ENCODE measurements at regions of chr16 and their contacts with region 1.

Region 1: GRCh38 chr16:20849587-20850390 is 43.5 kb downstream of the REXO5 start:
- DNase-seq: peak; percentile 30 to 71 (median 54)
- ATAC-seq: peak; percentile 82
- H3K4me3 ChIP-seq: no peak overlapping the region
- H3K4me3 Mint-ChIP-seq: no peak overlapping the region
- H3K27ac ChIP-seq: no peak overlapping the region
- H3K27ac Mint-ChIP-seq: peak overlapping the region in 1 of 9 donors; percentile 41
- H3K4me1 ChIP-seq: peaks cover 5 to 7% of the 10 kb centered on the region in 2 donors
- H3K4me1 Mint-ChIP-seq: peaks cover 6 to 37% (median 12%) of the 10 kb centered on the region in 7 donors
- H3K27me3 ChIP-seq: no peaks in the 10 kb centered on the region
- H3K27me3 Mint-ChIP-seq: no peaks in the 10 kb centered on the region

Region 2: GRCh38 chr16:20829536-20829935 is 20.3 kb before region 1 on chr16:
- CTCF ChIA-PET with region 1: no interaction called
- POLR2A ChIA-PET with region 1: no interaction called
- intact Hi-C with region 1: loop called in 1 of 2 experiments (anchors 1 kb)
- DNase-seq: no peak
- ATAC-seq: no peak
- H3K4me3 ChIP-seq: no peak overlapping the region
- H3K4me3 Mint-ChIP-seq: no peak overlapping the region
- H3K27ac ChIP-seq: no peak overlapping the region
- H3K27ac Mint-ChIP-seq: no peak overlapping the region
- H3K4me1 ChIP-seq: no peaks in the 10 kb centered on the region
- H3K4me1 Mint-ChIP-seq: no peaks in the 10 kb centered on the region
- H3K27me3 ChIP-seq: no peaks in the 10 kb centered on the region
- H3K27me3 Mint-ChIP-seq: no peaks in the 10 kb centered on the region

Region 3: GRCh38 chr16:20933589-20933988 is 83.8 kb after region 1 on chr16:
- CTCF ChIA-PET with region 1: no interaction called
- POLR2A ChIA-PET with region 1: no interaction called
- intact Hi-C with region 1: no loop called
- DNase-seq: no peak
- ATAC-seq: no peak
- H3K4me3 ChIP-seq: no peak overlapping the region
- H3K4me3 Mint-ChIP-seq: no peak overlapping the region
- H3K27ac ChIP-seq: no peak overlapping the region
- H3K27ac Mint-ChIP-seq: no peak overlapping the region
- H3K4me1 ChIP-seq: no peaks in the 10 kb centered on the region
- H3K4me1 Mint-ChIP-seq: peaks cover 0 to 8% (median 0%) of the 10 kb centered on the region in 7 donors
- H3K27me3 ChIP-seq: no peaks in the 10 kb centered on the region
- H3K27me3 Mint-ChIP-seq: peaks cover 0 to 7% (median 0%) of the 10 kb centered on the region in 5 donors

Region 4: DNA sequence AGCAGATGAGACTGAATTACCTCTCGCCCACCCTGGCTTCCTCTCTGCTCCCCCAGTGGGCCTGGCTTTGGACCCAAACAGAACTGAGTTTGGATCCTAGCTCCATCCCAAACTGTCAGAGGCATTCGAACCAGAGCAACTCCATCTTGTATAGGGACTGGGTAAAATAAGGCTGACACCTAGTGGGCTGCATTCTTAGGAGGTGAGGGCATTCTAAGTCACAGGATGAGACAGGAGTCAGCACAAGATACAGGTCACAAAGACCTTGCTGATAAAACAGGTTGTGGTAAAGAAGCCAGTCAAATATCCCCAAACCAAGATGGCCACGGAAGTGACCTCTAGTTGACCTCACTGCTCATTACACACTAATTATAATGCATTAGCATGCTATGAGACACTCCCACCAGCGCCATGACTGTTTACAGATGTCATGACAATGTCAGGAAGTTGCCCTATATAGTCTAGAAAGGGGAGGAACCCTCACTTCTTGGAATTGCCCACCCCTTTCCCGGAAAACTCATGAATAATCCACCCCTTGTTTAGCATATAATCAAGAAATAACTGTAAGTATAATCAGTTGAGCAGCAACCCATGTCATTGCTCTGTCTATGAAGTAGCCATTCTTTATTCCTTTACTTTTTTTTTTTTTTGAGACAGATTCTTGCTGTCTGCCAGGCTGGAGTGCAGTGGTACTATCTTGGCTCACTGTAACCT is 95.2 kb after region 1 on chr16:
- CTCF ChIA-PET with region 1: interaction called, 3 read pairs
- POLR2A ChIA-PET with region 1: no interaction called
- intact Hi-C with region 1: loop called (anchors 1 to 5 kb)
- DNase-seq: peak in 5 of 9 donors; percentile 3 to 32 (median 4)
- ATAC-seq: peak; percentile 74
- H3K4me3 ChIP-seq: no peak overlapping the region
- H3K4me3 Mint-ChIP-seq: no peak overlapping the region
- H3K27ac ChIP-seq: no peak overlapping the region
- H3K27ac Mint-ChIP-seq: peak overlapping the region in 1 of 9 donors; percentile 64
- H3K4me1 ChIP-seq: no peaks in the 10 kb centered on the region
- H3K4me1 Mint-ChIP-seq: peaks cover 0 to 42% (median 5%) of the 10 kb centered on the region in 7 donors
- H3K27me3 ChIP-seq: no peaks in the 10 kb centered on the region
- H3K27me3 Mint-ChIP-seq: peaks cover 0 to 8% (median 0%) of the 10 kb centered on the region in 5 donors

Region 5: GRCh38 chr16:20976576-20976975 is 126.8 kb after region 1 on chr16:
- CTCF ChIA-PET with region 1: no interaction called
- POLR2A ChIA-PET with region 1: no interaction called
- intact Hi-C with region 1: no loop called
- DNase-seq: no peak
- ATAC-seq: no peak
- H3K4me3 ChIP-seq: no peak overlapping the region
- H3K4me3 Mint-ChIP-seq: no peak overlapping the region
- H3K27ac ChIP-seq: no peak overlapping the region
- H3K27ac Mint-ChIP-seq: no peak overlapping the region
- H3K4me1 ChIP-seq: no peaks in the 10 kb centered on the region
- H3K4me1 Mint-ChIP-seq: no peaks in the 10 kb centered on the region
- H3K27me3 ChIP-seq: no peaks in the 10 kb centered on the region
- H3K27me3 Mint-ChIP-seq: peaks cover 4 to 13% (median 5%) of the 10 kb centered on the region in 5 donors

Region 6: GRCh38 chr16:21083729-21084268 is 234.0 kb after region 1 on chr16:
- CTCF ChIA-PET with region 1: interaction called, 23 read pairs
- POLR2A ChIA-PET with region 1: no interaction called
- intact Hi-C with region 1: loop called (anchors 1 kb)
- DNase-seq: peak in 8 of 9 donors; percentile 12 to 60 (median 33)
- ATAC-seq: peak; percentile 78
- H3K4me3 ChIP-seq: no peak overlapping the region
- H3K4me3 Mint-ChIP-seq: no peak overlapping the region
- H3K27ac ChIP-seq: no peak overlapping the region
- H3K27ac Mint-ChIP-seq: no peak overlapping the region
- H3K4me1 ChIP-seq: no peaks in the 10 kb centered on the region
- H3K4me1 Mint-ChIP-seq: peaks cover 0 to 6% (median 0%) of the 10 kb centered on the region in 7 donors
- H3K27me3 ChIP-seq: no peaks in the 10 kb centered on the region
- H3K27me3 Mint-ChIP-seq: peaks cover 0 to 20% (median 0%) of the 10 kb centered on the region in 5 donors

Region 7: DNA sequence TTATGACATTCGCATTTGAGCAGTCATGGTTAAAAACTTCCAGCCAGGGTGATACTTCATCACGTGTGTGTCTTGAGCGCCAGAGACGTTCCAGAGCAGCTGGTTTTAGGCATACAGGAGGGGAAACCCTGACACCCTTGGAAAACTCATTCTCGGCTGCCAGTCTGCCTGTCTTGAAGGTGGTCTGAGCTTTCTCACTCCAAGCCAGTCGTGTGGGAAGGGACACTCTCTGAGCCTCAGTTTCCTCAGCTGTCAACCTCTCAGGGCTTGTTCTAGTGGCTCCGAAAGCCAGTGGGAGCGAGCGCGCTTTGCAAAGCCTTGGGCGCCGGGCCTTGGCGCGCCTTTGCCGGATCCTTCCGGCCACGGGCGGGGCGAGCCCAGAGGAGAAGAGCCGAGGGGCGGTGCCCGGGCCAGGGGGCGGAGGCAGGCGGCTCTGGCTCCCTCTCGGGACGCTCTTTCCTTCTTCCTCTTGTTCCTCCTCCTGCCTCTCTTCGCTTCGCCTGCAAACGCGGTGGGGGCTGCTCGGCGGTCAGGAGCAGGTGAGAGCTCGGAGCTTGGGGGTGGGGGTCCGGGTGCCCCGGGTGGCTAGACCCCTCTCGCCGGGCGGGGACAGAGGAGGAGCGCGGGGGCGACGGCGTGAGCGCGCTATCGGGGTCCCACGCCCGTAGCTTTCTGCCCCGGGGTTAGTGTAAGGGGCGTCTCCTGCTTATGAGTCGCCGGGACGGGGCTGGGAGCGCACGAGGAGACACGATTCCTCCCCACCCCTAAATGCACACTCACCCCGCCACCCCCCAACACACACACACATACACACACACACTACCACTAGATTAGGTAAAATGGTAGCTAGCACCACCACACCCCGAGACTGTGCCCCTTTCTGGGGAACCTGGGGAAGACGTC is 308.7 kb after region 1 on chr16 and contains the start of gene LDAF1:
- CTCF ChIA-PET with region 1: no interaction called
- POLR2A ChIA-PET with region 1: no interaction called
- intact Hi-C with region 1: loop called in 1 of 2 experiments (anchors 10 kb)
- DNase-seq: peak; percentile 59 to 86 (median 74)
- ATAC-seq: peak; percentile 97
- H3K4me3 ChIP-seq: peak within 1 kb of the TSS; percentile 62
- H3K4me3 Mint-ChIP-seq: peak within 1 kb of the TSS; percentile 88 to 96 (median 94)
- H3K27ac ChIP-seq: peak within 1 kb of the TSS; percentile 65
- H3K27ac Mint-ChIP-seq: peak within 1 kb of the TSS; percentile 60 to 91 (median 71)
- H3K4me1 ChIP-seq: peaks cover 9 to 12% of the 10 kb centered on the region in 2 donors
- H3K4me1 Mint-ChIP-seq: peaks cover 10 to 35% (median 30%) of the 10 kb centered on the region in 7 donors
- H3K27me3 ChIP-seq: no peaks in the 10 kb centered on the region
- H3K27me3 Mint-ChIP-seq: no peaks in the 10 kb centered on the region
- total RNA-seq, gene LDAF1: 8.2 to 16.9 (median 11.0) TPM

Region 8: DNA sequence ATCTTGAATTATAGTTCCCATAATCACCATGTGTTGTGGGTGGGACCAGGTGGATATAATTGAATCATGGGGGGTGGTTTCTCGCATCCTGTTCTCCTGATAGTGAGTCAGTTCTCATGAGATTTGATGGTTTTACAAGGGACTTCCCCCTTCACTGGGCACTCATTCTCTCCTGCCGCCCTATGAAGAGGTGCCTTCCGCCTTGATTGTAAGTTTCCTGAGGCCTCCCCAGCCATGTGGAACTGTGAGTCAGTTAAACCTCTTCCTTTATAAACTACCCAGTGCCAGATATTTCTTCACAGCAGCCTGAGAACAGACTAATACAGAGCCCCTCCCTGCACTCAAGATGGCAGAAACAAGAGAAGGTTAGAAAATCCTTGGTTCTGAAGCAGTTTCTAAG is 335.0 kb after region 1 on chr16:
- CTCF ChIA-PET with region 1: no interaction called
- POLR2A ChIA-PET with region 1: no interaction called
- intact Hi-C with region 1: loop called in 1 of 2 experiments (anchors 1 kb)
- DNase-seq: no peak
- ATAC-seq: peak; percentile 18
- H3K4me3 ChIP-seq: no peak overlapping the region
- H3K4me3 Mint-ChIP-seq: no peak overlapping the region
- H3K27ac ChIP-seq: no peak overlapping the region
- H3K27ac Mint-ChIP-seq: no peak overlapping the region
- H3K4me1 ChIP-seq: no peaks in the 10 kb centered on the region
- H3K4me1 Mint-ChIP-seq: peaks cover 0 to 5% (median 4%) of the 10 kb centered on the region in 7 donors
- H3K27me3 ChIP-seq: no peaks in the 10 kb centered on the region
- H3K27me3 Mint-ChIP-seq: peaks cover 0 to 3% (median 0%) of the 10 kb centered on the region in 5 donors

Region 9: GRCh38 chr16:21554795-21555585 is 705.2 kb after region 1 on chr16:
- CTCF ChIA-PET with region 1: interaction called, 3 read pairs
- POLR2A ChIA-PET with region 1: no interaction called
- intact Hi-C with region 1: loop called in 1 of 2 experiments (anchors 10 kb)
- DNase-seq: peak; percentile 77 to 94 (median 90)
- ATAC-seq: peak; percentile 97
- H3K4me3 ChIP-seq: peak overlapping the region; percentile 36
- H3K4me3 Mint-ChIP-seq: peak overlapping the region; percentile 34 to 76 (median 64)
- H3K27ac ChIP-seq: no peak overlapping the region
- H3K27ac Mint-ChIP-seq: peak overlapping the region in 5 of 9 donors; percentile 20 to 58 (median 50)
- H3K4me1 ChIP-seq: peaks cover 6 to 7% of the 10 kb centered on the region in 2 donors
- H3K4me1 Mint-ChIP-seq: peaks cover 0 to 14% (median 9%) of the 10 kb centered on the region in 7 donors
- H3K27me3 ChIP-seq: no peaks in the 10 kb centered on the region
- H3K27me3 Mint-ChIP-seq: peaks cover 0 to 5% (median 5%) of the 10 kb centered on the region in 5 donors

Measured in naive thymus-derived CD4-positive, alpha-beta T cell (primary cell).